Tibial artery (tissue), 4 donors: ENCODE measurements at regions of chr20 and their contacts with region 1.

Region 1: GRCh38 chr20:51042654-51043247 is 19.8 kb upstream of the KCNG1 start:
- DNase-seq: no peak
- H3K4me3 ChIP-seq: no peak overlapping the region
- H3K27ac ChIP-seq: no peak overlapping the region
- H3K4me1 ChIP-seq: no peaks in the 10 kb centered on the region
- H3K27me3 ChIP-seq: peaks cover 0 to 28% of the 10 kb centered on the region in 2 donors
- CTCF ChIP-seq: no peak

Region 2: GRCh38 chr20:51237278-51237677 is 194.5 kb after region 1 on chr20:
- intact Hi-C with region 1: loop called (anchors 10 kb)
- DNase-seq: peak in 1 of 2 donors; percentile 28
- H3K4me3 ChIP-seq: no peak overlapping the region
- H3K27ac ChIP-seq: no peak overlapping the region
- H3K4me1 ChIP-seq: no peaks in the 10 kb centered on the region
- H3K27me3 ChIP-seq: peaks cover 0 to 14% of the 10 kb centered on the region in 2 donors
- CTCF ChIP-seq: no peak

Region 3: DNA sequence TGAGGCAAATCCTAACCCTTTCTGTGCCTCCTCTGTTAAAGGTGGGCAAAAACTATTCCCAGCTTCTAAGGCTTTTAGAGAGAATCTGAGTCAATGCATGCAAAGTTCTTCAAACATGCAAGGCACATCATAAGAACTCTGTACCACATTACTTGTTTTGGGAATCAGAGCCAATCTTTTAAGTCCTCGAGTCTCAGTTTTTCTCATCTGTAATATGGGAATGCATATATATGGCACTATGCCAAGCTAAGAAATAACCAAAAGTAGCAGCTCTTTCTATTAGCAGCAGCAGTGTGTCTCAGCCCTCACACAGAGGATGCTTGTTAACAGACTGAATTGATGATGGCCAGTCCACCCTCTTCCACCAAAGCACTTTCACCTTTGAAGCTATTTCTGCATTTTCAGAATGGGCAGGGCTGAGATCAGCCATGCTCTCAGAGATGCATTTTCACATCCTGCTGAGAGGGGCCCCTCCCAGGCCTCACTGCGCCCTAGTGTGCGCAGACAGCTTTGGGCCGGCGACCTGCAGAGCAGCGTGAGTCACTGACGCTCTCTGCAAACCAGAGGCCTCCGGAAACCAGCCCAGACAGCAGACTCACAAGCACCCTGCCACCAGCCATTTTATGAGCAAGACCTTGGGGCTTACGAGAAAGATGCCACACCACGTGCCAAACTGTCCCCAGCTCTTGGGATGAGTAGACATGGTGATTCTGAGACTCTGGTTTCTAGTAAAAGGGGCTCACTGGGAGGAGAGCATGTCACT is 361.7 kb after region 1 on chr20:
- intact Hi-C with region 1: no loop called
- DNase-seq: no peak
- H3K4me3 ChIP-seq: no peak overlapping the region
- H3K27ac ChIP-seq: no peak overlapping the region
- H3K4me1 ChIP-seq: no peaks in the 10 kb centered on the region
- H3K27me3 ChIP-seq: no peaks in the 10 kb centered on the region
- CTCF ChIP-seq: no peak